CD8-positive, alpha-beta T cell (primary cell): ENCODE measurements at regions of chr9 and their contacts with region 1.

Region 1: GRCh38 chr9:100352727-100353505 is at the start of gene TEX10:
- DNase-seq: peak; percentile 72 to 93 (median 88)
- ATAC-seq: peak; percentile 89
- H3K4me3 ChIP-seq: peak within 1 kb of the TSS; percentile 90 to 92
- H3K4me3 Mint-ChIP-seq: peak within 1 kb of the TSS; percentile 94
- H3K27ac ChIP-seq: peak within 1 kb of the TSS; percentile 68
- H3K27ac Mint-ChIP-seq: peak within 1 kb of the TSS; percentile 91
- H3K4me1 ChIP-seq: peaks cover 32% of the 10 kb centered on the region
- H3K4me1 Mint-ChIP-seq: peaks cover 60% of the 10 kb centered on the region
- H3K27me3 ChIP-seq: no peaks in the 10 kb centered on the region
- H3K27me3 Mint-ChIP-seq: no peaks in the 10 kb centered on the region
- CTCF ChIP-seq: no peak
- total RNA-seq, gene TEX10: 9.5 to 9.8 TPM

Region 2: GRCh38 chr9:99906403-99907207 is 446.3 kb before region 1 on chr9 and contains the start of gene STX17:
- CTCF ChIA-PET with region 1: no interaction called
- POLR2A ChIA-PET with region 1: no interaction called
- intact Hi-C with region 1: loop called in 1 of 2 experiments (anchors 5 kb)
- DNase-seq: peak; percentile 64 to 92 (median 84)
- ATAC-seq: peak; percentile 85
- H3K4me3 ChIP-seq: peak within 1 kb of the TSS; percentile 95 to 96
- H3K4me3 Mint-ChIP-seq: peak within 1 kb of the TSS; percentile 97
- H3K27ac ChIP-seq: peak within 1 kb of the TSS; percentile 98 to 99
- H3K27ac Mint-ChIP-seq: peak within 1 kb of the TSS; percentile 100
- H3K4me1 ChIP-seq: peaks cover 20% of the 10 kb centered on the region
- H3K4me1 Mint-ChIP-seq: peaks cover 33% of the 10 kb centered on the region
- H3K27me3 ChIP-seq: no peaks in the 10 kb centered on the region
- H3K27me3 Mint-ChIP-seq: no peaks in the 10 kb centered on the region
- CTCF ChIP-seq: no peak
- total RNA-seq, gene STX17: 21.0 to 23.1 TPM

Region 3: DNA sequence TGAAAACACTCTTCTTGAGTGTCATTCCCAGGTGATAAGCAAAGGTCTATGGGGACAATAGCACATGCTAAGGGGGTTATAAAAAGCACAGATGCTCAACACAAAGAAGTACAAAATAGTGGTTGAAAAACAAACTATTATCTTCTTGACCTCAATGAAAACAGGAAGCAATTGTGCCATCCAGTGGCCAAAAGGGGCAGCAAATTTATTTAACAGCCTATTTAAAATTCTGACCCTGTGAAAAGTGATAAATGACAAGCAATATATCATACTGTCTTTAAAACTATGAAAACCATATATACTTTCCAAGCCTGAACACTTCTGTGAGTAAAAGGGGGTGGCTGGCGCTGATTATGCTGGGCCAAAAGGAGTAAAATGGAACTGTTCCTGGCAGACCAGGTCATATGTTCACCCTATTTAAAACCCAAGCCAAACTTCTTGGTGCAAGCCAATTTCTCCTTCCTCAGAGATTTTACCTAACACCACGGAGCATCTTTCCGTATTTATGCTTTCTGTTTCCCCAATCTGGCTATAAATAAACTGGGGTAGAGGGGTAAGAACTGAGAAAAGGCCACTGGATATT is 29.9 kb before region 1 on chr9:
- CTCF ChIA-PET with region 1: interaction called, 3 read pairs
- POLR2A ChIA-PET with region 1: interaction called, 8 read pairs
- intact Hi-C with region 1: loop called in 1 of 2 experiments (anchors 2 kb)
- DNase-seq: peak in 4 of 9 experiments; percentile 11 to 48 (median 30)
- ATAC-seq: no peak
- H3K4me3 ChIP-seq: no peak overlapping the region
- H3K4me3 Mint-ChIP-seq: no peak overlapping the region
- H3K27ac ChIP-seq: no peak overlapping the region
- H3K27ac Mint-ChIP-seq: no peak overlapping the region
- H3K4me1 ChIP-seq: no peaks in the 10 kb centered on the region
- H3K4me1 Mint-ChIP-seq: peaks cover 14% of the 10 kb centered on the region
- H3K27me3 ChIP-seq: no peaks in the 10 kb centered on the region
- H3K27me3 Mint-ChIP-seq: no peaks in the 10 kb centered on the region
- CTCF ChIP-seq: peak; percentile 39

Region 4: DNA sequence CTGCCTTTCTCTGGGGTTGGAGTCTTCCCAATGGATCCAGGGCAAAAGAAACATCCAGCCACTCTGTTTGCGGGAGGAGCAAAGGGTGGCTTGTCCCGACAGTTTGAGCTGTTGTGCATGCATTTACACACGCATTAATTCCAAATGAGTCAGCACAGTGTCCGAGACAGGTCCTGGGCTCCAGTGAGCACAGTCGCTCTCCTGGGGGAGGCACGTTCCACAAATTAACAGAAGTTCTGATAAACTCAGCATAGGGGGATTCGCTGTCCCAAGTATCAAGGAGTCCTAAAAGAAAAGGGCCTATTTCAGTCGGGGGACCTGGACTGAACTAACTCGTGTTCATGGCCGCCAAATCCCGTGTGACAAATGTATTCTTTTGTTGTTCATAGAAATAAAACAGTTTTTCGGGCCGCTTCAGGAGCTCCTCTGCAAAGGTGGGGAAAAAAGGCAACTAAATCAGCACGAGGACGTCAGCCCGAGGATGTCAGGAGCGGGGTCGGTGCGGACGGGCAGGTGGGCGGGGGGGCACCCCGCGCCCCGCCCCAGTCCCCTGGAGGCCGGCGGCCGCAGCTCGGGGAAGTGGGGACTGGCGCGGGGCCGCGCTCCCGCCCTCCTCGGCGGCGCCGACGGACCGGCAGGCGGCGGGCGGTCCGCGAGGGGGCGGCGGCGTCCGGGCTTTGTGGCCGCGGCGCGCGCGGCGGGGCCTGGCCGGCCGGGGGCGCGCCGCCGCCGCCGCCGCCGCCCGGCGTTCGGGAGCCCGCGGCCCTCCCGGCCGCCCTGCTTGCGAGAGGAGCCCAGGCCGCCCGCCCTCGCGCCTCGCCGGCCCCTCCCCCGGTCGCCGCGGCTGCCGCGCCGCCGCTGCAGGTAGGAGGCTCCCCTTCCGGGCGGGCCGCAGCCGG is 73.9 kb after region 1 on chr9 and contains the start of gene MSANTD3:
- CTCF ChIA-PET with region 1: no interaction called
- POLR2A ChIA-PET with region 1: interaction called, 5 read pairs
- intact Hi-C with region 1: loop called (anchors 1 to 2 kb)
- DNase-seq: peak; percentile 20 to 78 (median 58)
- ATAC-seq: peak; percentile 84
- H3K4me3 ChIP-seq: peak within 1 kb of the TSS; percentile 69 to 74
- H3K4me3 Mint-ChIP-seq: peak within 1 kb of the TSS; percentile 97
- H3K27ac ChIP-seq: peak within 1 kb of the TSS; percentile 31 to 35
- H3K27ac Mint-ChIP-seq: peak within 1 kb of the TSS; percentile 95
- H3K4me1 ChIP-seq: peaks cover 18% of the 10 kb centered on the region
- H3K4me1 Mint-ChIP-seq: peaks cover 35% of the 10 kb centered on the region
- H3K27me3 ChIP-seq: no peaks in the 10 kb centered on the region
- H3K27me3 Mint-ChIP-seq: peaks cover 4% of the 10 kb centered on the region
- CTCF ChIP-seq: no peak
- total RNA-seq, gene MSANTD3: 10.2 to 10.8 TPM

Region 5: DNA sequence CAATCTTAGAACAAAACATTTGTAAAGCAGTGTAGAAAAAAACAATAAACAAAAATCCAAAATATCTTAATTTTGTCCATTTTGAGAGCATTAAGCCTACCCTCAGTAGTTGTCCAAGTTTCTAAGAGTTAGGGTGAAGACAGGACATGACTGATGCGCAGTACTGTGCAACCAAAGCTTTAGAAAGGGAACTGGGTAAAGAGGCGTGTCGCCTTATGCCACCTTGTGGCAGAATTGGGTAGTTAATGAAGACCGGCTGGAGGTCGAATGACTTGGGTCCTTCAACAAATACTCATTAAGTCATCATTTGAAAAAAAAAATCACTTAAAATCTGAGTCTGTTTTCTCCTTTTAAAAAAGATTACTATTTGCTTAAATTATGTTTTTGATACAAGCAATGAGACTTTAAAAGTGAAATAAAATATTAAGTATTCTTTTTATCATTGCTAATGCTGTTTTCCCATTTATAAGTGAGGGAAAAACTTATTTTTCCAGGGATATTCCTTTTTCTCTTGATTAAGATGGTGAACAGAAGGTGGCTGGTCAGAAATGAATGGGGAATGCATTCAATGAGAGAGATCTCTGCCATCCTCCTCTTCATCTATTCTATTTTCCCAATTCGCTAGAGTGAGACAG is 1177.3 kb after region 1 on chr9:
- CTCF ChIA-PET with region 1: no interaction called
- POLR2A ChIA-PET with region 1: no interaction called
- intact Hi-C with region 1: loop called (anchors 5 to 10 kb)
- DNase-seq: peak; percentile 36 to 83 (median 65)
- ATAC-seq: peak; percentile 33
- H3K4me3 ChIP-seq: no peak overlapping the region
- H3K4me3 Mint-ChIP-seq: no peak overlapping the region
- H3K27ac ChIP-seq: no peak overlapping the region
- H3K27ac Mint-ChIP-seq: no peak overlapping the region
- H3K4me1 ChIP-seq: peaks cover 14% of the 10 kb centered on the region
- H3K4me1 Mint-ChIP-seq: peaks cover 20% of the 10 kb centered on the region
- H3K27me3 ChIP-seq: no peaks in the 10 kb centered on the region
- H3K27me3 Mint-ChIP-seq: peaks cover 10% of the 10 kb centered on the region
- CTCF ChIP-seq: peak; percentile 86